K562 (cell line): ENCODE measurements at regions of chr3 and their contacts with region 1.

Region 1: DNA sequence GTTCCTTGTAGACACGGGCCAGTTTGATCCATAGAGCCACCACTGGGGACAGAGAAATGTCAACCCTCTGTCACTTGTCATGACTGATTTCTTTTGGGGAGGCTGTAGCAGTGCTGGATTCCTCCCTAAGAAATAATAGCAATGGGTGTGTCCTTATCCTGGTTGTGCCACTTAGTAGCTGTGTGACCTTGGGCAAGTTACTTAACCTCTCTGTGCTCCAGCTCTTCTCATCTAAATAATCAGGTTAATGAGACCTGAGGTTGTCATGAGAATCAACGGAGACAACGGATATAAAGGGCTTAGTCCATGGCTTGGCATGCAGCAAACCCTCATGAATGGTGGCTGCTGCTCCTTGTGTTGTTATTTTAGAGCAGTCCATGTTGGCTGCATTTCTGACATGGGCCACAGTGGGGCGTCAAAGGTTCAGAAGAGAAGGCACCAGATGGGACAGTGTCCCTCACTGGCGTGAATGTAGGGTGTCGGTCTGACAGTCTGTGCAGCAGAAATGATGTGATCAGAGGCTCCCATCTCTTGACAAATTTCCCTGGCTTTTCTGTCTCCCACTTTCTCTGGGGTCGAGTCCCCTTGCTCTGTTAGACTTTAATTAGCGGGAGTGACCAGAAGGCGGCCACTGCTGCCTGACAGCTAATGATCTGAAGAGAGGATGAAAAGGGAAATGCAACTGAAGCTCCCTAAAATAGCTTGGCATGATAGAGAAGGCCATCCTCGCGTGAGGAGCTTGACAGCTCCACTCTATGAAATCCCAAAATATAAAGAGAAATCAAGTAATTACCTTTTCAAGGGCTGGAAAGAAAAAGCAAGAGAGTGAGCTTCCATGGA is 209.4 kb downstream of the CADPS start:
- DNase-seq: peak; percentile 25 to 50 (median 34)
- ATAC-seq: peak; percentile 88
- H3K4me3 ChIP-seq: no peak overlapping the region
- H3K27ac ChIP-seq: no peak overlapping the region
- H3K4me1 ChIP-seq: no peaks in the 10 kb centered on the region
- H3K27me3 ChIP-seq: no peaks in the 10 kb centered on the region
- CTCF ChIP-seq: peak; percentile 67 to 68 (median 67)
- EP300 ChIP-seq: no peak
- POLR2A ChIP-seq: no peak
- RAD21 ChIP-seq: peak; percentile 51 to 66

Region 2: GRCh38 chr3:62718515-62719320 is 52.9 kb after region 1 on chr3:
- CTCF ChIA-PET with region 1: no interaction called
- POLR2A ChIA-PET with region 1: no interaction called
- in situ Hi-C with region 1: no loop called
- intact Hi-C with region 1: no loop called
- DNase-seq: no peak
- ATAC-seq: no peak
- H3K4me3 ChIP-seq: no peak overlapping the region
- H3K27ac ChIP-seq: no peak overlapping the region
- H3K4me1 ChIP-seq: no peaks in the 10 kb centered on the region
- H3K27me3 ChIP-seq: no peaks in the 10 kb centered on the region
- CTCF ChIP-seq: no peak
- EP300 ChIP-seq: no peak
- POLR2A ChIP-seq: no peak
- RAD21 ChIP-seq: no peak

Region 3: DNA sequence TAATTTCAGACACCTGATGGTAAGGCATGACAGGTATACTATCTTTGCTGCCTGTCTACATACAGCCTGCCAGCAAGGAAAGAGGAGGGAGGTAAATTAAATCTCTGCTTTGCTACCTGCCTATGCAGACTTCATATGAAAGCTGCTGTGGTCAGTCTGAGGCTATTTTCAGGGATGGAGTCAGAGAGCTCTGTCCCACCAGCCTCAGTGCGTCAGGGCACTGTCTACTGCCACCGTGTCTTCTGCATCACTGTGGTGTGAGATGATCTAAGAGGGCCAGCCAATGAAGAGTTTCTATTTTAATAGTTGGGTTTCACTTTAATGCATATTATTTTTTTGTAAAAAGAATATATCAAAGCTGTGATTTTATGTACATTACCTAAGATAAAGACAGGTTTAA is 83.8 kb after region 1 on chr3:
- CTCF ChIA-PET with region 1: no interaction called
- POLR2A ChIA-PET with region 1: no interaction called
- in situ Hi-C with region 1: no loop called
- intact Hi-C with region 1: no loop called
- DNase-seq: no peak
- ATAC-seq: no peak
- H3K4me3 ChIP-seq: no peak overlapping the region
- H3K27ac ChIP-seq: no peak overlapping the region
- H3K4me1 ChIP-seq: no peaks in the 10 kb centered on the region
- H3K27me3 ChIP-seq: no peaks in the 10 kb centered on the region
- CTCF ChIP-seq: no peak
- EP300 ChIP-seq: no peak
- POLR2A ChIP-seq: no peak
- RAD21 ChIP-seq: no peak

Region 4: GRCh38 chr3:63193629-63194028 is 527.8 kb after region 1 on chr3:
- CTCF ChIA-PET with region 1: no interaction called
- POLR2A ChIA-PET with region 1: no interaction called
- in situ Hi-C with region 1: no loop called
- intact Hi-C with region 1: loop called (anchors 2 kb)
- DNase-seq: peak in 2 of 4 experiments; percentile 3 to 5
- ATAC-seq: no peak
- H3K4me3 ChIP-seq: no peak overlapping the region
- H3K27ac ChIP-seq: no peak overlapping the region
- H3K4me1 ChIP-seq: no peaks in the 10 kb centered on the region
- H3K27me3 ChIP-seq: no peaks in the 10 kb centered on the region
- CTCF ChIP-seq: peak in 2 of 3 experiments; percentile 8 to 42; a peak in 2 of 6 replicates
- EP300 ChIP-seq: no peak
- POLR2A ChIP-seq: no peak
- RAD21 ChIP-seq: peak; percentile 27 to 38; a peak in 3 of 4 replicates

Region 5: GRCh38 chr3:63226529-63226928 is 560.7 kb after region 1 on chr3:
- CTCF ChIA-PET with region 1: interaction called, 4 read pairs
- POLR2A ChIA-PET with region 1: no interaction called
- in situ Hi-C with region 1: no loop called
- intact Hi-C with region 1: loop called (anchors 2 kb)
- DNase-seq: no peak
- ATAC-seq: no peak
- H3K4me3 ChIP-seq: no peak overlapping the region
- H3K27ac ChIP-seq: no peak overlapping the region
- H3K4me1 ChIP-seq: no peaks in the 10 kb centered on the region
- H3K27me3 ChIP-seq: no peaks in the 10 kb centered on the region
- CTCF ChIP-seq: no peak
- EP300 ChIP-seq: no peak
- POLR2A ChIP-seq: no peak
- RAD21 ChIP-seq: no peak